KBM-7 (cell line): ENCODE measurements at regions of chr10 and their contacts with region 1.

Region 1: GRCh38 chr10:6108603-6109443 is 20.0 kb downstream of the RBM17 start:
- DNase-seq: peak; percentile 82

Region 2: GRCh38 chr10:5904227-5904626 is 204.6 kb before region 1 on chr10:
- in situ Hi-C with region 1: no loop called
- DNase-seq: no peak

Region 3: DNA sequence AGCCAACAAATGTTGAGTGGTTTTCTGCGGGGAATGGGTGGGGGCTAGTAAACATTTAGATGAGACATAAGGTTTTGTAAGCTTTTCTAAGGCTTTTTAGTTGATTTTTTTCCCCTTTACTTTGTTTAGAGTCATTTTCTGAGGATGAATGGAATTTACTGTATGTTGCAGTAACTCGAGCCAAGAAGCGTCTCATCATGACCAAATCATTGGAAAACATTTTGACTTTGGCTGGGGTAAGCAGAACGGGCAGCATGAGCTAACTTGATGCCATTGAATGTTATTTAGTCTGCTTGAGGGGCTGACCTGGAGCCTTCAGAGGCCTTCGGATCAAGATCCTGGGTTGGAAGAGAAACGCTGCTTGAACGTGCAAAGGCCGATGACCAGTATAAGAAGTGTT is 181.5 kb before region 1 on chr10:
- in situ Hi-C with region 1: no loop called
- DNase-seq: no peak

Region 4: DNA sequence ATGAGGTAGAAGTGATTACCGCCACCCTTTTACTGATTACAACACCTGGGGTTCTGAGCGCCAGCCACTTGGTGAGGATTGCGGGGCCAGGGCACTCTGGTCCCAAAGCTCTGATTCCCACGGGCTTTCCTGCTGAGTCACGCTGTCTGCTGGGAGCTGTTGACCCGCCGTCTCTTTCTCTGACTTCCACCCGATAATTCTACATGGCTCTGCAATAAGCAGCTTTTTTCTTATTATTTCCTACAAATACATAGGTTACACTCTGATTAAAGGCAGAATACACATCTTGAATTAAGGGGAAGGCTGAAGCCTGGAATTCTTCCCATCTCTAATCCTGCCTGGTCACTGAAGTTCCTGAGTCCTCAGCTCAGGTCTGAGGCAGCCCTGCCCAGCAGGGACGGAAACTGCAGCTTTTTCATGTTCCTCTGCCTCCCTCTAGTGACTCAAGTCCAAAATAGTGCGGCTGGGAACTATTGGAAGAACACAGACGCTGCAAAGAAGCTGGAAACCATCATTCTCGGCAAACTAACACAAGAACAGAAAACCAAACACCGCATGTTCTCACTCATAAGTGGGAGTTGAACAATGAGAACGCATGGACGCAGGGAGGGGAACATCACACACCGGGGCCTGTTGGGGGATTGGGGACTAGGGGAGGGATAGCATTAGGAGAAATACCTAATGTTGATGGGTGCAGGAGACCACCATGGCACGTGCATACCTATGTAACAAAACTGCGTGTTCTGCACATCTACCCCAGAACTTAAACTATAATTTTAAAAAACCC is 292.9 kb after region 1 on chr10:
- in situ Hi-C with region 1: loop called (anchors 10 kb)
- DNase-seq: peak; percentile 84

Region 5: GRCh38 chr10:6748978-6749635 is 640.3 kb after region 1 on chr10:
- in situ Hi-C with region 1: no loop called
- DNase-seq: no peak